Posterior vena cava (tissue), 2 donors: ENCODE measurements at regions of chr17 and their contacts with region 1.

Region 1: DNA sequence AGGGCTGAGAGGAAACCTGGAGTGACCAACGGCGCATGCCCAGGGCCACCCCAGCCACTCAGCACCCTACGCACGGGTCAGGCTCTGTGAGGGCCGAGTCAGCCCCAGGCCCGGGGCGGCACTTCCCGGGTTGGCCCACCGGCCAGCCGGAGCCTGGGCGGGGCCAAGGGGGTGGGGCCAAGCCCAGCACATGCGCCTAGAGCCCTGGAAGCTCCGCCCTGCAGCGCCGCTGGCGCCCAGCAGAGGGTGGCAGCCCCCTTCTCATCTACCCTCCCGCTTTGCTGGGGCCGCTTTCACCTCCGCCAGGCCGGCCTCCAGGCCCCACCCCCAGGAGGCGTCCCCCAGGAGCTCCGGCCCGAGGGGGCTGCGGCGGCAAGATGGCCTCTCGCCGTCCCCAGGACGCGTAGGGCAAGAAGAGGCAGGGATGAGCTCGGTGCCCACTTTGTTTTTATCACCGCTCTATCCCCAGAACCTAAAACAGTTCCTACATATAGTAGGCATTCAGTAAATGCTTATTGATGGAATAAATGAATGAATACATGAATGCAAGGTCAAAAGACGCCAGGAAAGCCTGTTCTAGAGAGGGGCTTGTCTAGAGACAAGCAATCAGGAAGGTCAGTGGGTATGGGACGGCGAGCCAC is 31.3 kb downstream of the MYO18A start:
- DNase-seq: peak; percentile 98

Region 2: GRCh38 chr17:28896884-28897768 is 251.8 kb before region 1 on chr17 and contains the start of gene FLOT2:
- intact Hi-C with region 1: no loop called
- DNase-seq: peak; percentile 91
- total RNA-seq, gene FLOT2: 99.0 to 101 TPM

Region 3: DNA sequence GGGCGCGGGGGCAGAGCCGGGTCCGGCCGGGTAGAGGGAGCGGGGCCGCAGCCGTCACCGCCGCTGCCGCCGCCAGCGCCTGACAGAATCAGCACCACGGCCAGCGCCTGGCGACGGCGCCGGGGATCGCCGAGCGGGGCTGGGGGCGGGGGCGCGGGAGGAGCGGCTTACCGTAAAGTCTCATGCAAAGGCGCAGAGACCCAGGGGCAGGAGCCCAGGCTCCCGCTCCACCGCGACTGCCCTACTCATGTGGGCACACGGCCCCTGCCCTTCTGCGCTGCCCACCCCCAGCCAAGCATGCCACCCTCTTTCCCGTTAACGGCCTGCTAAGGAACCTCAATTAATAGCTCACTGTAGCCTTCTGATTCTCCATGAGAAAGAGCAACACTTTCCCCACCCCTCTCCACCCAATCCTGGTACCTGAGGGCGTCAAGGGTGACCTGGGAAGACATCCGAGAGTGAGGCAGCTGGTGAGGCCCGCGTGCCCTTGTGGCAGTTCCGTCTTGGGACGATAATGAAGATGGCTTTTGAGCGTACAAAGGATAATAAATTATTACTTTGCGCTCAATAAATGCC is 142.9 kb before region 1 on chr17 and contains the start of gene SEZ6:
- intact Hi-C with region 1: no loop called
- DNase-seq: peak; percentile 92
- total RNA-seq, gene SEZ6: not detected

Region 4: GRCh38 chr17:29124117-29124924 is 24.6 kb before region 1 on chr17:
- intact Hi-C with region 1: no loop called
- DNase-seq: no peak

Region 5: GRCh38 chr17:29180034-29180787 is 31.3 kb after region 1 on chr17 and contains the start of gene MYO18A:
- intact Hi-C with region 1: loop called in 1 of 2 experiments (anchors 5 kb)
- DNase-seq: peak; percentile 94
- total RNA-seq, gene MYO18A: 76.3 to 87.9 TPM

Region 6: DNA sequence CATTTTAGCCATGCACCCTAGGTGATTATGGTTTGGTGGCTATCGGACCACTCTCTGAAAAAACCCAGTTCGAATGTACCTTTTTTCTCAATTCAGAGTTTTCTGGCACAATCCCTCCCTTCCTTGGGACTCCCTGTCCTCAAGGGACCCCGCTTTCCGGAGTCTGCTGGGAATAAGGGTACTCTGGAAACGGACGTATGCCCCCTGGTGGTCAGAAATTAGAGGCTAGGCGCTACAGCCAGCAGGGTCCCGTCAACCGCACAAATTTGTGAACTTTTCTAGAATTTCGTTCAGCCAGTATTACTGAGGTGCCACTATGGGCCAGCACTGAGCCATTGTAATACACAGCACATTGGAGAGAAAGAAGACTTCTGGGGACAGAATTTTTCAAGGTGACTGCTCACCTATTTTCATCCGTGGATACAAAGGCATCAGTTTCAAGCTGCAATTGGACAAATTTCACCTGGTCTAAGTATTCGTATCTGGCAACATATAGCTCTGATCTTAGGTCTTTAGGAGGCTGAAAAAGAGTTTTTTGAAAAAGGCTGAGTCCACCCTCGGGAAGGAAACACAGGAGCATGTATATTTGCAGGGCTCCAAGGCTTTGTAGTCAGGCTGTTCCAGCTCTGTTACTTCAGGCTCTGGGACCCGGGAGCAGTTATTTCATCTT is 70.6 kb after region 1 on chr17:
- intact Hi-C with region 1: loop called in 1 of 2 experiments (anchors 2 kb)
- DNase-seq: peak; percentile 87

Region 7: DNA sequence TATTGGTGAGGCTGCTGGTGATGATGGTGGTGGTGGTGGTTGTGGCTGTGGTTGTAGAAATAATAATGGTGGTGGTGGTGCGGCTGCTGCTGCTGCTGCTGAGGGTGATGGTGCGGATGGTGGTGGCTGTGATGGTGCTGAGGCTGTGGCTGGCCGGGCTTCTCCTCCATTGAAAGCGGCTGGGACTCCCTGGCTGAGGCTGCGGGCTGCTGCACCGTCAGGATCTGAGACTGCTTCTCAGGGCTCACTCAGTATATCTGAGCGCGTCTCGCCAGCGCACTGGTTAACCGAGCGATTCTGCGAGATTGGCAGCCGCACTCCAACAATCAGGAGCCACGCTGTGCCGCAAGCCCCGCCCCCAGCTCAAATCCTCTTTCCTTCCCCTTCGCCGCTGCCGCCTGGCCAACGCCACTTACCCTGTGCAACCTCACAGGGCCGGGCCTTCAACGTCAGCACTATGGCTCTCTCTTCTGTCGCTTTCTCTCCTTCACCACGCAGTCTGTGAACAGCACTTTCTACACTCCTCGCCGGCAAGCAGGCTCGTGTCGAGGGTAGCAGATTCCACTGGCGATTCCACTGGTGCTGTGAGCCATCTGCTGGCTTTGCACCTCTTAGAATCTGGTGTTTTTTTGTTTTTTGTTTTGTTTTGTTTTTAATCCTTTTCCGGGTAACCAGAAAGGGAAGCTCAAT is 145.1 kb after region 1 on chr17 and contains the start of gene NUFIP2:
- intact Hi-C with region 1: loop called (anchors 5 to 10 kb)
- DNase-seq: peak; percentile 100
- total RNA-seq, gene NUFIP2: 39.6 to 46.9 TPM